K562 (cell line): ENCODE measurements at regions of chr9 and their contacts with region 1.

Region 1: DNA sequence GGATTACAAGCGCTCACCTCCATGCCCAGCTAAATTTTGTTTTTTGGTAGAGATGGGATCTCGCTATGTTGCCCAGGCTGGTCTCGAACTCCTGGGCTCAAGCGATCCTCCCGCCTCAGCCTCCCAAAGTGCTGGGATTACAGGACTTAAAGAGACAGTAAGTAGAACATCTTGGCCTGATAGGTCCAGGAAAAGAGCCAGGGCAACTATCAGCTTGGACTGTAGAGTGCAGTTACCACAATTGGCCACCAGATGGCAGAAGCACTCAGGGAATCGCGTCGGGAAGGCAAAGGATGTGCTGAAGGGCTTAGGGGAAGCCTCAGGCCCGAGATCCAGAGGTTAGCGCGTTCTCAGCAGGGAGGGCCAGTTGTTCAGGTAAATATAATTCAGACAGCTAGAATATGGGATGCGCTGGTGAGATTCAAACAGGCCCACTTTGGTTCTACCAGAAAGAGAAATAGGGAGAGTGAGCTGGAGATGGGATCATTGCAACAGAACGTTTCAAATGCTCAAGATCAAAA is 21.5 kb downstream of the C9orf57 start:
- DNase-seq: peak; percentile 59 to 73 (median 69)
- ATAC-seq: peak; percentile 93
- H3K4me3 ChIP-seq: no peak overlapping the region
- H3K27ac ChIP-seq: no peak overlapping the region
- H3K4me1 ChIP-seq: no peaks in the 10 kb centered on the region
- H3K27me3 ChIP-seq: peaks cover 0 to 14% of the 10 kb centered on the region in 2 experiments; a peak in 4 of 5 replicates
- CTCF ChIP-seq: peak; percentile 79 to 87 (median 86)
- EP300 ChIP-seq: no peak
- POLR2A ChIP-seq: no peak
- RAD21 ChIP-seq: peak; percentile 89 to 93

Region 2: GRCh38 chr9:71692337-71692736 is 346.6 kb before region 1 on chr9:
- CTCF ChIA-PET with region 1: no interaction called
- POLR2A ChIA-PET with region 1: no interaction called
- in situ Hi-C with region 1: no loop called
- intact Hi-C with region 1: no loop called
- DNase-seq: no peak
- ATAC-seq: no peak
- H3K4me3 ChIP-seq: no peak overlapping the region
- H3K27ac ChIP-seq: no peak overlapping the region
- H3K4me1 ChIP-seq: no peaks in the 10 kb centered on the region; a peak in 1 of 5 replicates
- H3K27me3 ChIP-seq: no peaks in the 10 kb centered on the region
- CTCF ChIP-seq: no peak
- EP300 ChIP-seq: no peak
- POLR2A ChIP-seq: no peak
- RAD21 ChIP-seq: no peak

Region 3: DNA sequence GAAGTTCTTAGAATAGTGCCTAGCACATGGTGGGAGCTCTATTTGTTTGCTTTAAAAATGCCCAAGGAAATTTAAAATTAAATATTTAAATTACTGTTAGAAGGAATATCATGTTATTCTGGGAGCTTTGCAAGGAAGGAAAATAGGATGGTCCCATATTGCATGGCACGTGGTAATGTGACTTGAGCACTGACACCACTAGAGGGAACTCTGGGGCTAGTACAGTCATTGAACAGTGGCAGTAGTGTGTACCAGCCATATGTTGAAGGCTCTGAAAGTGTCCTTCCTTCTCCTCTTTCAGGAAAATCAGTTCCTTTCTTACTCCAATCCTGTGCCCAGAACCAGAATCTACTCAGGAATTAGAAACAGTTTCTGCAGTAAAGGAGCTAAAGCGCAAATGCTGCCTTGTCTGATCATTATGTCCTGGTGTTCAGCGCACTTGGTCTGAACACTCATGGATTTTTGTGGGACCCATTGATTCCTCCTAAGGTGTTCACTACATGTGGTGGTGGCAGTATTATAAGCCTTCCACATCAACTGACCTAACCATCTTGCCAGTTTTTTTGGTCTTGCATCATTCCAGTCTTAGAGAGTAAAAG is 164.4 kb after region 1 on chr9:
- CTCF ChIA-PET with region 1: no interaction called
- POLR2A ChIA-PET with region 1: no interaction called
- in situ Hi-C with region 1: no loop called
- intact Hi-C with region 1: loop called (anchors 5 kb)
- DNase-seq: peak; percentile 9 to 32 (median 19)
- ATAC-seq: peak; percentile 88
- H3K4me3 ChIP-seq: no peak overlapping the region
- H3K27ac ChIP-seq: no peak overlapping the region
- H3K4me1 ChIP-seq: no peaks in the 10 kb centered on the region
- H3K27me3 ChIP-seq: no peaks in the 10 kb centered on the region
- CTCF ChIP-seq: peak; percentile 36 to 43 (median 40); a peak in 4 of 6 replicates
- EP300 ChIP-seq: no peak
- POLR2A ChIP-seq: no peak
- RAD21 ChIP-seq: peak in 1 of 2 experiments; percentile 28; a peak in 2 of 4 replicates

Region 4: DNA sequence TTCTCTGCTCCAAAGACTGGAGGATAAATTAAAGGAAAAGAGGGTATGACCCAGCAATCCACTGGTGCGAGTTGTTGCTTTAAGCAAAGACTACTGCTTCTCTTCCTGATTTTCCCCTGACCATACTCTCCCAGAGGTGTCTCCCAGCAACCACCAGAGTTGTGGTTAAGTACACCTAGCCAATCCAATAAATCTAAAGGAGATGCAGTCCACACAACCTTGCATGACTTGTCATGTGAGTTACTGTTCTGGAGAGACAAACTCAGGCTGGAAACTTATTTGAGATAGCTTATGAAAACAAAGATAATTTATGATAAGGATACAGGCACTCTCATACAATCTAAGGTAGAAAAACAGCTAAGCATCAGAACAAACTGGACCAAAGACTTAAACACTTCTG is 494.4 kb after region 1 on chr9:
- CTCF ChIA-PET with region 1: no interaction called
- POLR2A ChIA-PET with region 1: no interaction called
- in situ Hi-C with region 1: no loop called
- intact Hi-C with region 1: no loop called
- DNase-seq: no peak
- ATAC-seq: no peak
- H3K4me3 ChIP-seq: no peak overlapping the region
- H3K27ac ChIP-seq: no peak overlapping the region
- H3K4me1 ChIP-seq: no peaks in the 10 kb centered on the region
- H3K27me3 ChIP-seq: no peaks in the 10 kb centered on the region
- CTCF ChIP-seq: no peak
- EP300 ChIP-seq: no peak
- POLR2A ChIP-seq: no peak
- RAD21 ChIP-seq: no peak

Region 5: DNA sequence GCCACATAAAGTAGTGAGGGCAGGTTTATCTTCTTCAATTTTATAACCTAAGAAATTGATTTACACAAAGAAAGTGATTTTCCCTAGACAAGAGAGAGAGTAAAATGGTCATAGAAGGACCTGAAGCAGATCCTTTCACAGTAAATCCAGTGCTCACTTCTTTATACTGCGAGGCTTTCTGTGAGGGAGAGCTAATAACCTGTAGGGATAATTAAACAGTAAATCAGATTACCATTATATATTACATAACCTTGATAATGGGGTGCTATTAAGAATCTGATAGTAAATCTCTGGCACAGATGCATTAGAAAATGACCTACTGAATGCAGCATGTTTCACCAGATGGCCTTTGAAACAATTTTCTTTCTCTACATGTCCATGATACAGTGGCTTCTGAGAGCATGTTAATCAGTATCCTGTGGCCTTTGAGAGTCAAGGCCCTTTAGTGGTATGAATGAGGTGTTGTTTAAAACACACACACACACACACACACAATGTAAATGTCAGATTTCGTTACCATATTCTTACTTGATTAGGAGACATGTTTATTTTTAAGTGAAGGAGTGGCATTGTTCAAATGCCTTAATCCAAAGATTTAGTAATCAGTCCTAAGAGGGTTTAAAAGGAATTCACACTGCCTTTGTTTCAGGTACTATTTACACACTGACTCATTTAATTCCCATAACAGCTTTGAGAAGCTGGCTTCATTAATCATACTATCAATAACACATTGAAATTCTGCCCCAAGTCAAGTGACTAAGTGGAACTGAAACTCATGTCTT is 789.2 kb after region 1 on chr9:
- CTCF ChIA-PET with region 1: interaction called, 3 read pairs
- POLR2A ChIA-PET with region 1: no interaction called
- in situ Hi-C with region 1: loop called (anchors 10 kb)
- intact Hi-C with region 1: loop called (anchors 5 kb)
- DNase-seq: no peak
- ATAC-seq: no peak
- H3K4me3 ChIP-seq: no peak overlapping the region
- H3K27ac ChIP-seq: no peak overlapping the region
- H3K4me1 ChIP-seq: no peaks in the 10 kb centered on the region
- H3K27me3 ChIP-seq: no peaks in the 10 kb centered on the region; a peak in 2 of 5 replicates
- CTCF ChIP-seq: no peak
- EP300 ChIP-seq: no peak
- POLR2A ChIP-seq: no peak
- RAD21 ChIP-seq: no peak